ENCODE measurements at regions of chr1 and their contacts with region 1.

Region 1: DNA sequence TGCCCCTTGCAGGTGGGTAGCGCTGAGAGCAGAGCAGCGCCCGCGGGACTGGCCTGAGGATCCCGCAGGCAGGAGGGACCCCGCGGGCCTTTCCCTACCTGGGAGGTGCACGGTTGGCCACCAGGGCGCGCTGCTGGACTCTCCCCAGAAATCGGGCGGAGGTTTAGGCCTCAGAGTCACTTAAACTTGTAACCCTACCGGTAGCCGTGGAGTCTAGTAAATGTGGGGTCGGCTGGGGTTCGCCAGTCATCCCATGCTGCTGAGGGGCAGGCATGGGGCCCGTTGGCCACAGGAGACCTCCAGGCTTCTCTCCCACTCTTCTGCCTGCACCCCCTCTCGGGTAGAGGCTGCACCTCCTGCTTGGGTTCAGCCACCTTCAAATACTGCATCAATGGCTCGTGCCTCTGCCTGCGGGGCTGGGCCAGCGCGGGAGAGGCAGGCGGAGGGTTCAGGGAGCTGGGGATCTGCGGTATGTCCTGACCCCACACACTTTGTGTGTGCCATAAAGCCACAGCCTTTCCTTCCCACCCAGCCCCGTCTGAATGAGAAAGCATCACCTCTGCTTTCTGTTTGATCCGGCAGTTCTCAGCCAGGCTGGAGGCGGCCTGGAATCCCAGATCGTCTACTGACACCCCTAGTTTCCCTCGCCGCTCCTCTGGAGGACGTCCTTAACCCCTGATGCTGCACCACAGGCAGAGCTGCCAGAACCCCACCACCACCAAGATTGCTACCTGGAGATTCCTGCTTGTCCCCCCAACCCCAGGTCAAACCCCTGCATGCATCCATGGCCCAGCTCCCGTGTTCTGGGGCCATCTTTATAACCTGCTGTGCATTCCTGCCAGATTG is 12.3 kb upstream of the GSTM4 start:
- DNase-seq: peak; percentile 63
- H3K4me3 ChIP-seq: no peak overlapping the region
- H3K27ac ChIP-seq: no peak overlapping the region
- H3K4me1 ChIP-seq: no peaks in the 10 kb centered on the region
- H3K27me3 ChIP-seq: no peaks in the 10 kb centered on the region
- CTCF ChIP-seq: peak; percentile 86 to 97
- POLR2A ChIP-seq: no peak

Region 2: GRCh38 chr1:109548321-109549267 is 95.0 kb before region 1 on chr1 and contains the start of gene GNAI3:
- CTCF ChIA-PET with region 1: interaction called, 565 read pairs
- POLR2A ChIA-PET with region 1: interaction called, 7 read pairs
- dilution Hi-C with region 1: no loop called
- intact Hi-C with region 1: loop called (anchors 1 kb)
- DNase-seq: peak; percentile 96
- H3K4me3 ChIP-seq: peak within 1 kb of the TSS; percentile 75 to 98 (median 96)
- H3K27ac ChIP-seq: peak within 1 kb of the TSS; percentile 87
- H3K4me1 ChIP-seq: peaks cover 29% of the 10 kb centered on the region
- H3K27me3 ChIP-seq: peaks cover 0 to 2% of the 10 kb centered on the region in 2 experiments
- CTCF ChIP-seq: no peak
- POLR2A ChIP-seq: peak; percentile 89
- total RNA-seq, gene GNAI3: 12.9 and 14.0 TPM in 2 replicates

Region 3: DNA sequence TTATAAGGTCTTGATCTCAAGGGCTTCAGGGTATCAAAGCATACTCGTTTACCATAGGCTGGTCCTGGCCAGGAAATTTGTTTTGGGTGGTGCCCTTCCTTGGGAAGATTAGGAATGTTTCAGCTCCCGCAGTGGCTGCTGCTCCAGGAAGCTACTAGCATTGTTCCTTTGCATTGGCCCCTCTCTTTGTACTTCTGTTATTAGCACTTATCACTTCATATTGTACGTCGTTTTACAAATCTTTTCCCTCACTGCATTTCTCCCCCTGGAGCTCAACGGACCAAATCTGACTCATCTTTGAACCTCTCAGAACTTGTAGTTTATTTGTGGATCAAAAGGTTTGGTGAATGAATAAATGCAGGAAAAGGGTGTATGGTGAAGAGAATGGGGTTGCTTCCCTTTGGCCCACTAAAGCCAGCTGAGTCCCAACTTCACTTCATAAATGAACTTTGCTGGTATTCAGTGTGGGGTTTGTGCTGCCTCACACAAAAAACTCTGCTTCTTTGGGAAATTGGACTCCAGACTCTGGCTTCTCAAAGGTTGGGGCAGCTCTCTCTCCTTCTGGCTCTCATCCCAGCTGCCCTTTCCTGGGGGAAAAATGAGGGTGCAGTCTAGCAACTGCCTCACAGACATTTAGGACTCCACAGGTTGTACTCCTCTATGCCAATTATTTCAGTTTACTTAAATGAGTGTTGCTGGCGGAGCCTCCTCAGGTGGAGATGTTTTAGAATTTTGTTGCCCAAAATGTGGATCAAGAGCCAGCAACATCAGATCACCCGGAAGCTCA is 30.1 kb before region 1 on chr1:
- CTCF ChIA-PET with region 1: interaction called, 14 read pairs
- POLR2A ChIA-PET with region 1: no interaction called
- dilution Hi-C with region 1: no loop called
- intact Hi-C with region 1: no loop called
- DNase-seq: peak; percentile 68
- H3K4me3 ChIP-seq: no peak overlapping the region
- H3K27ac ChIP-seq: peak overlapping the region; percentile 30
- H3K4me1 ChIP-seq: peaks cover 51% of the 10 kb centered on the region
- H3K27me3 ChIP-seq: no peaks in the 10 kb centered on the region
- CTCF ChIP-seq: no peak
- POLR2A ChIP-seq: no peak

Region 4: DNA sequence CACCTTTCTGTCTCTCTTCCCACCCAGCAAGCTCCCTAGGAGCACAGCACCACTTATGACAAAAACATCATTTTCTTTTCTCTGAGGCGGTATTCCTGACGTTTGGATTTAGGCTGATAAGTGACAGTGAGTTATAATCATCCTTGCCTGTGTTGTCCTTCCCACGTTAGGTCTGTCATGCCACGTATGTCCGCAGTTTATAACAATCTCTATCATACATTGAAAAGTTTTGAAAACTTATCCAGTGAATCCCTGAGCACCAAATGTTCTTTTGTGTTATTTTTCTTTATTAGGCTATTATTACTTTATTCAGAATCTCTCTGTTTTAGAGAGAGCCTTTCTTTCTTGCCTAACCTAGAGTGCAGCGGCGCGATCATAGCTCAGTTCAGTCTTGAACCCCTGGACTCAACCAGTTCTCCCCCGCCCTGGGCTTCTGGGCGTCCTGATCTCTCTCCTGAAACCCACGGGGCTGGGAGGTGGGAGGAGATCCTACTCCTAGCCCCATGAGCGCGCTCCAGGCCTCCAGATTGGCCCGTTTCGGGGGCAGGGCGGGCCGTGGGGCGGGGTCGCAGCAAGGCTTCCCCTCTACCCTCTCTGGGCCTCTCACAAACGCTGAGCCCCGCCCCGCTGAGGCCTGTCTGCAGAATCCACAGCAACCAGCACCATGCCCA is 24.0 kb after region 1 on chr1 and contains the start of gene GSTM2:
- CTCF ChIA-PET with region 1: interaction called, 20 read pairs
- POLR2A ChIA-PET with region 1: no interaction called
- dilution Hi-C with region 1: no loop called
- intact Hi-C with region 1: no loop called
- DNase-seq: peak; percentile 85
- H3K4me3 ChIP-seq: peak within 1 kb of the TSS; percentile 13 to 33 (median 15)
- H3K27ac ChIP-seq: no peak within 1 kb of the TSS
- H3K4me1 ChIP-seq: peaks cover 5% of the 10 kb centered on the region
- H3K27me3 ChIP-seq: no peaks in the 10 kb centered on the region
- CTCF ChIP-seq: no peak
- POLR2A ChIP-seq: no peak
- total RNA-seq, gene GSTM2: 12.0 and 21.5 TPM in 2 replicates

Region 5: GRCh38 chr1:109721041-109721440 is 77.4 kb after region 1 on chr1:
- CTCF ChIA-PET with region 1: no interaction called
- POLR2A ChIA-PET with region 1: no interaction called
- dilution Hi-C with region 1: no loop called
- intact Hi-C with region 1: no loop called
- DNase-seq: no peak
- H3K4me3 ChIP-seq: no peak overlapping the region
- H3K27ac ChIP-seq: no peak overlapping the region
- H3K4me1 ChIP-seq: peaks cover 8% of the 10 kb centered on the region
- H3K27me3 ChIP-seq: peaks cover 2 to 5% of the 10 kb centered on the region in 2 experiments
- CTCF ChIP-seq: no peak
- POLR2A ChIP-seq: no peak

Region 6: GRCh38 chr1:109773146-109773899 is 129.7 kb after region 1 on chr1:
- CTCF ChIA-PET with region 1: interaction called, 391 read pairs
- POLR2A ChIA-PET with region 1: interaction called, 4 read pairs
- dilution Hi-C with region 1: no loop called
- intact Hi-C with region 1: loop called (anchors 1 kb)
- DNase-seq: peak; percentile 78
- H3K4me3 ChIP-seq: no peak overlapping the region
- H3K27ac ChIP-seq: no peak overlapping the region
- H3K4me1 ChIP-seq: no peaks in the 10 kb centered on the region
- H3K27me3 ChIP-seq: peaks cover 0 to 4% of the 10 kb centered on the region in 2 experiments
- CTCF ChIP-seq: peak; percentile 88 to 92
- POLR2A ChIP-seq: no peak

Measured in endothelial cell of umbilical vein (primary cell).